ENCODE measurements at regions of chr2 and their contacts with region 1.

Region 1: DNA sequence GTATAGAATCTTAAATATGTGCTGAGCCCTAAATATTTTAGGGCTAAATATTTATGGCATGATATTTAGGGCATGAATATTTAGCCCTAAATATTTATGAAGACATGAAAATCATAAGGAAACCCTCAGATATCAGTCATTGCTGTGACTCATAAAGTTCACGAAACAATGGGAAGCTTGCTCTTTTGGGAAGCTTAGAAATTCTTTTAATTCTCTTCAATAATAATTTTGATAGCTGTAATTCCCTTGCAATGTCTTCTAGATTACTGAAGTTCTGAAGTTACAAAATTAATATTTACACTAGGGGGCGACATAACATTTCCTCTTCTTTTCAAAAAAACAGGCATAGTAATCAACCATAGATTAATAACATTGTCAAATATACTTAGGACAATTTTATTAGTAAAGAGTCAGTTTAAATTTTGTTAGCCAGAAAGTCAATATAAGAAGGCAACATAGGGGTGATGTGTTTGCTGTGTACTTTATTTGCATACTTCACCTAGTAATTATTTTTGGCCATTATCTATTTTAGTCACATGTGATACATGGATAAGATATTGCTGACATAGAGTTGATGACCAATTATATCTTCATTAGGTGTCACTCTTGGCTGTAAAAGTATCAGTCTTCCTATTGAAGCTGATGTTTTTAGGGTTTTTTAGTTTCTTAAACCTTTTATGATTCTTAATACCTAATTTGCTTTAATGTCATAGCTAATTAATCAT is 13.2 kb downstream of the ZNF804A start:
- DNase-seq: no peak
- ATAC-seq: no peak
- H3K4me3 Mint-ChIP-seq: no peak overlapping the region
- H3K27ac Mint-ChIP-seq: no peak overlapping the region
- H3K4me1 Mint-ChIP-seq: no peaks in the 10 kb centered on the region
- H3K27me3 Mint-ChIP-seq: no peaks in the 10 kb centered on the region
- CTCF ChIP-seq: peak; percentile 25

Region 2: GRCh38 chr2:184633726-184634125 is 22.2 kb after region 1 on chr2:
- CTCF ChIA-PET with region 1: no interaction called
- POLR2A ChIA-PET with region 1: no interaction called
- intact Hi-C with region 1: no loop called
- DNase-seq: no peak
- ATAC-seq: no peak
- H3K4me3 Mint-ChIP-seq: no peak overlapping the region
- H3K27ac Mint-ChIP-seq: no peak overlapping the region
- H3K4me1 Mint-ChIP-seq: no peaks in the 10 kb centered on the region
- H3K27me3 Mint-ChIP-seq: no peaks in the 10 kb centered on the region
- CTCF ChIP-seq: no peak

Region 3: GRCh38 chr2:184646177-184646576 is 34.7 kb after region 1 on chr2:
- CTCF ChIA-PET with region 1: no interaction called
- POLR2A ChIA-PET with region 1: no interaction called
- intact Hi-C with region 1: no loop called
- DNase-seq: no peak
- ATAC-seq: peak; percentile 86
- H3K4me3 Mint-ChIP-seq: no peak overlapping the region
- H3K27ac Mint-ChIP-seq: no peak overlapping the region
- H3K4me1 Mint-ChIP-seq: peaks cover 10% of the 10 kb centered on the region
- H3K27me3 Mint-ChIP-seq: no peaks in the 10 kb centered on the region
- CTCF ChIP-seq: no peak

Region 4: DNA sequence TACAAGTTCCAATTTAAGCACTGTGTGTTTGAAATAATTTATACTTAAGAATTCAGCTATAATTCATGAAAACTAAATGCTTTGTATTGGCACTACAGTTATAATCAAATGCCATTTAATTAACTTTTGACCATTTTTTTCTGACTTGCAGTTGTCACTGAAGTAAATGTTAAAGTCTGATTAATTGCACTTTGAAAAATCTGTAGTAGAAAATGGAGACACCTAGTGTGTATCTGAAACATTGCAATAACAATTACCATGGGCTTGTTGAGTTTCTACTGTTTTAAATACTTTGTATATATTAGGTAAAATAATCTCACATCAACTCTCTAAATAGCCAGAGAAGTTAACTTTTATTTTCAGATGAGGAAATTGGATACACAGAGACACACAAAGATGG is 668.5 kb after region 1 on chr2:
- CTCF ChIA-PET with region 1: no interaction called
- POLR2A ChIA-PET with region 1: no interaction called
- intact Hi-C with region 1: loop called (anchors 2 kb)
- DNase-seq: no peak
- ATAC-seq: no peak
- H3K4me3 Mint-ChIP-seq: no peak overlapping the region
- H3K27ac Mint-ChIP-seq: no peak overlapping the region
- H3K4me1 Mint-ChIP-seq: no peaks in the 10 kb centered on the region
- H3K27me3 Mint-ChIP-seq: no peaks in the 10 kb centered on the region
- CTCF ChIP-seq: no peak

Region 5: GRCh38 chr2:186256540-186256939 is 1645.0 kb after region 1 on chr2:
- CTCF ChIA-PET with region 1: no interaction called
- POLR2A ChIA-PET with region 1: no interaction called
- intact Hi-C with region 1: loop called (anchors 5 kb)
- DNase-seq: no peak
- ATAC-seq: no peak
- H3K4me3 Mint-ChIP-seq: no peak overlapping the region
- H3K27ac Mint-ChIP-seq: no peak overlapping the region
- H3K4me1 Mint-ChIP-seq: no peaks in the 10 kb centered on the region
- H3K27me3 Mint-ChIP-seq: no peaks in the 10 kb centered on the region
- CTCF ChIP-seq: no peak

Region 6: DNA sequence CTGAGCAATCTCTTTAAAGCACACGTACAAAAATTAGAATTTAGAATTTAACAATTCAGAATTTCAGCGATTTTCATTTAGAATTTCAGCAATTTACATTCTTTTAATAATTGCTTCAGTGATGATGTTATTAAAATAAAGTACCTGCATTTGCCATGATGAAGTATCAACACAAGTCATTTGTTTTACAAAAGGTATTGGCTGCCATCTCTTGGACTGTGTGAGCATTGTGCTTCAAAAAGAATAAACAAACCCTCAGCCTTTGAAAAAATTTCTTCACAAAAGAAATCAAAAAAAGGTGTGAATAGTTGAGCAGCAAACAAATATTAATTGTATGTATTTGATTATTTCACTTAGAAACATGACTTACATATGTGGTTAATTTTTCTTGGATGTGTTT is 1847.5 kb after region 1 on chr2:
- CTCF ChIA-PET with region 1: no interaction called
- POLR2A ChIA-PET with region 1: no interaction called
- intact Hi-C with region 1: loop called (anchors 5 kb)
- DNase-seq: no peak
- ATAC-seq: no peak
- H3K4me3 Mint-ChIP-seq: no peak overlapping the region
- H3K27ac Mint-ChIP-seq: no peak overlapping the region
- H3K4me1 Mint-ChIP-seq: no peaks in the 10 kb centered on the region
- H3K27me3 Mint-ChIP-seq: no peaks in the 10 kb centered on the region
- CTCF ChIP-seq: no peak